ENCODE measurements at regions of chr7 and their contacts with region 1.

Region 1: GRCh38 chr7:155543011-155543876 is 3.1 kb downstream of the CNPY1 start:
- DNase-seq: peak; percentile 39
- H3K4me3 ChIP-seq: no peak overlapping the region
- CTCF ChIP-seq: no peak

Region 2: GRCh38 chr7:155506854-155507337 is 36.3 kb before region 1 on chr7:
- in situ Hi-C with region 1: loop called (anchors 5 kb)
- DNase-seq: no peak
- H3K4me3 ChIP-seq: no peak overlapping the region
- CTCF ChIP-seq: no peak